Activated CD4-positive, alpha-beta T cell treated with anti-CD3 and anti-CD28 coated beads for 36 hours (primary cell): ENCODE measurements at regions of chr15 and their contacts with region 1.

Region 1: DNA sequence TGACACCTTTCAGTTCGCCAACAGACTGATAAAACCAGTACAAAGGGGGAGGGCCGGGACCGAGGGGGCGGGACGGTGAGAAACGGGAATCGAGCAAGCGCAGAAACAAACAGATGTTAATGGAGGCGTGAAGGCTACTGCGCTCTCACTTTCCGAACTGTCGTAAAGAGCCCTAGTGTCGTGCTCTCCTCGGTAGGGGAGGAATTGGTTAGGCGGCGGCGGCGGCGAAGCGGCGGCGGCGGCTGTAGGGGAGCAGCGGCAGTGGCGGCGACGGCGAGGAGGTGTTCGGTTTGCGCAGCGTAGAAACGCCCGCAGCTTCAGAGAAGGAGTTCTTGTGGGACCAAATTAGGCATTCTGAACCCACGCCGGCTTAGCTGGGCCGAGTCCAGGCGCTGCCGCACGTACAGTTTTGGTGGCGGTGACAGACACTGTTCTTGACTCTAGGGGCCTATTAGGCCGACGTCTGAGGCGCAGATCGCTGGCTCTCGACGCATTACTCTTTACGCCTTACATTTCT is at the start of gene RNF111:
- DNase-seq: peak; percentile 93
- ATAC-seq: peak; percentile 91
- H3K4me3 Mint-ChIP-seq: peak within 1 kb of the TSS; percentile 96
- H3K27ac Mint-ChIP-seq: peak within 1 kb of the TSS; percentile 92
- H3K4me1 Mint-ChIP-seq: peaks cover 37% of the 10 kb centered on the region
- H3K27me3 Mint-ChIP-seq: no peaks in the 10 kb centered on the region
- total RNA-seq, gene RNF111: 27.0 to 36.0 TPM

Region 2: GRCh38 chr15:57706405-57707209 is 1280.9 kb before region 1 on chr15 and contains the start of gene POLR2M:
- CTCF ChIA-PET with region 1: no interaction called
- POLR2A ChIA-PET with region 1: no interaction called
- intact Hi-C with region 1: loop called in 1 of 2 experiments (anchors 5 kb)
- DNase-seq: peak; percentile 96
- ATAC-seq: peak; percentile 94
- H3K4me3 Mint-ChIP-seq: peak within 1 kb of the TSS; percentile 90
- H3K27ac Mint-ChIP-seq: peak within 1 kb of the TSS; percentile 95
- H3K4me1 Mint-ChIP-seq: peaks cover 70% of the 10 kb centered on the region
- H3K27me3 Mint-ChIP-seq: no peaks in the 10 kb centered on the region
- total RNA-seq, gene POLR2M: 76.1 to 87.2 TPM

Region 3: GRCh38 chr15:57902155-57902554 is 1085.4 kb before region 1 on chr15:
- CTCF ChIA-PET with region 1: no interaction called
- POLR2A ChIA-PET with region 1: no interaction called
- intact Hi-C with region 1: no loop called
- DNase-seq: no peak
- ATAC-seq: no peak
- H3K4me3 Mint-ChIP-seq: no peak overlapping the region
- H3K27ac Mint-ChIP-seq: no peak overlapping the region
- H3K4me1 Mint-ChIP-seq: no peaks in the 10 kb centered on the region
- H3K27me3 Mint-ChIP-seq: peaks cover 10% of the 10 kb centered on the region

Region 4: DNA sequence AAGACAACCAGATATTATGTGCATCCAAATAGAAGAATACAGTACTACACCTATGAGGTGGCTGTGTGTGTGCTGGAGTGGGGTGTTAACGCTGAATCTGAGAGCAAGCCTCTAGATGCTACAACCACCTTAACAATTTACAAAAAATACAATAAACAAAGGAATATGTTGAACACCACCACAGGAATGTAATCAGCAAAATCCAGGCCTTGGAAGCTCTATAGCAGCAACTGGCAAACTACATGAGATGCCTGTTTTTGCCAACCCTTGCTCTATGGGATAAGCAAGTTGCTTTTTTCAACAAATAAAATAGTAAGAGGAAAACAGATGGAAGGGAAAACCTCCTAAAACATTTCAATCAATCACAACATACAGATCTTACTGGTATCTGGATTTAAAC is 77.9 kb before region 1 on chr15:
- CTCF ChIA-PET with region 1: no interaction called
- POLR2A ChIA-PET with region 1: no interaction called
- intact Hi-C with region 1: no loop called
- DNase-seq: no peak
- ATAC-seq: no peak
- H3K4me3 Mint-ChIP-seq: no peak overlapping the region
- H3K27ac Mint-ChIP-seq: no peak overlapping the region
- H3K4me1 Mint-ChIP-seq: peaks cover 39% of the 10 kb centered on the region
- H3K27me3 Mint-ChIP-seq: no peaks in the 10 kb centered on the region

Region 5: GRCh38 chr15:58957101-58957973 is 30.2 kb before region 1 on chr15:
- CTCF ChIA-PET with region 1: interaction called, 10 read pairs
- POLR2A ChIA-PET with region 1: no interaction called
- intact Hi-C with region 1: no loop called
- DNase-seq: peak; percentile 73
- ATAC-seq: peak; percentile 84
- H3K4me3 Mint-ChIP-seq: no peak overlapping the region
- H3K27ac Mint-ChIP-seq: no peak overlapping the region
- H3K4me1 Mint-ChIP-seq: peaks cover 10% of the 10 kb centered on the region
- H3K27me3 Mint-ChIP-seq: no peaks in the 10 kb centered on the region

Region 6: DNA sequence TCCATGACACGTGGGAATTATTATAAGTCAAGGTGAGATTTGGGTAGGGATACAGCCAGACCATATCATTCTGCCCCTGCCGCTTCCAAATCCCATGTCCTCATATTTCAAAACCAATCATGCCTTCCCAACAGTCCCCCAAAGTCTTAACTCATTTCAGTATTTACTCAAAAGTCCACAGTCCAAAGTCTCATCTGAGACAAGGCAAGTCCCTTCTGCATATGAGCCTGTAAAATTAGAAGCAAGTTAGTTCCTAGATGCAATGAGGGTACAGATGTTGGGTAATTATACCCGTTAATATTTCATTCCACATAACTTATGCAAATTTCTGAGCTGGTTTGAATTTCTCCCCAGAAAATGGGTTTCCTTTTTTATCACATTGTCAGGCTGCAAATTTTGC is 47.7 kb after region 1 on chr15:
- CTCF ChIA-PET with region 1: no interaction called
- POLR2A ChIA-PET with region 1: no interaction called
- intact Hi-C with region 1: no loop called
- DNase-seq: no peak
- ATAC-seq: no peak
- H3K4me3 Mint-ChIP-seq: no peak overlapping the region
- H3K27ac Mint-ChIP-seq: no peak overlapping the region
- H3K4me1 Mint-ChIP-seq: peaks cover 47% of the 10 kb centered on the region
- H3K27me3 Mint-ChIP-seq: no peaks in the 10 kb centered on the region

Region 7: DNA sequence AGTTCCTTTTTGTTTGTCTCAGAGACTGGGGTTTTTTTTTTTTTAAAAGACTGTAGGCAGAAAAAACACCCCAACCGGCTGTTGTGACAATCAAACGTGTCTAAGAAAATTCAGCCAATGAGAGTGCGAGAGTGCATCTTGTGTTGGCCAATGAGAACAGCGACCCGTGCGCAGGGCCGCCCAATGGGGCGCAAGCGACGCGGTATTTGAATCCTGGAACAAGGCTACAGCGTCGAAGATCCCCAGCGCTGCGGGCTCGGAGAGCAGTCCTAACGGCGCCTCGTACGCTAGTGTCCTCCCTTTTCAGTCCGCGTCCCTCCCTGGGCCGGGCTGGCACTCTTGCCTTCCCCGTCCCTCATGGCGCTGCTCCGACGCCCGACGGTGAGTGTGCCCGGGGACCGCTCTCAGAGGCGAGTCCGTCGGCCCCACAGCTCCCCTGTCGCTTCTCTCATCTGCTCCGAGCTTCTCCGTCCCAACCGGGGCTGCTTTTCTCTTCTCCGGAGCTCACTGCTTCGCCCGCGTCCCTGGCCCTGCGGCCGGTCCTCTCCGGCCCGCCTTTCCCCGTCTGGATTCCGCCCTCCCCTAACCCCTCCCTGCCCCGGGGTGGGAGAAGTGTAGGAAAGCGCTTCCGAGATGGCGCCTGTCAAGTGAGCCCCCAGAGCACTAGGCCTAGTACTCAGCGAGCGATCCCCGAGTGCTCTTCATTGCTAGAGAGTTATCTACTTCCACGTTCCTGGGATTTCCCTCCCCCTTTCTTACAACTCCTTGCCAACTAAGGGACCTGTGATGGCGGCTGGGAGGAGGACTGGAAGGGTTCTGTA is 117.6 kb after region 1 on chr15 and contains the start of gene CCNB2:
- CTCF ChIA-PET with region 1: no interaction called
- POLR2A ChIA-PET with region 1: no interaction called
- intact Hi-C with region 1: loop called in 1 of 2 experiments (anchors 1 kb)
- DNase-seq: peak; percentile 92
- ATAC-seq: peak; percentile 99
- H3K4me3 Mint-ChIP-seq: peak within 1 kb of the TSS; percentile 91
- H3K27ac Mint-ChIP-seq: peak within 1 kb of the TSS; percentile 91
- H3K4me1 Mint-ChIP-seq: peaks cover 11% of the 10 kb centered on the region
- H3K27me3 Mint-ChIP-seq: no peaks in the 10 kb centered on the region
- total RNA-seq, gene CCNB2: 68.0 to 75.3 TPM

Region 8: GRCh38 chr15:59247364-59247763 is 259.8 kb after region 1 on chr15:
- CTCF ChIA-PET with region 1: no interaction called
- POLR2A ChIA-PET with region 1: no interaction called
- intact Hi-C with region 1: no loop called
- DNase-seq: peak; percentile 66
- ATAC-seq: peak; percentile 55
- H3K4me3 Mint-ChIP-seq: no peak overlapping the region
- H3K27ac Mint-ChIP-seq: no peak overlapping the region
- H3K4me1 Mint-ChIP-seq: peaks cover 3% of the 10 kb centered on the region
- H3K27me3 Mint-ChIP-seq: no peaks in the 10 kb centered on the region

Region 9: GRCh38 chr15:59656897-59657634 is 669.5 kb after region 1 on chr15 and contains the start of gene GTF2A2:
- CTCF ChIA-PET with region 1: no interaction called
- POLR2A ChIA-PET with region 1: no interaction called
- intact Hi-C with region 1: loop called in 1 of 2 experiments (anchors 2 kb)
- DNase-seq: peak; percentile 97
- ATAC-seq: peak; percentile 100
- H3K4me3 Mint-ChIP-seq: no peak within 1 kb of the TSS
- H3K27ac Mint-ChIP-seq: peak within 1 kb of the TSS; percentile 89
- H3K4me1 Mint-ChIP-seq: peaks cover 10% of the 10 kb centered on the region
- H3K27me3 Mint-ChIP-seq: no peaks in the 10 kb centered on the region
- total RNA-seq, gene GTF2A2: 167 to 198 TPM